Calu3 (cell line): ENCODE measurements at regions of chr5 and their contacts with region 1.

Region 1: GRCh38 chr5:50667653-50668595 is 1.5 kb downstream of the PARP8 start:
- DNase-seq: peak; percentile 89
- H3K4me3 Mint-ChIP-seq: peak overlapping the region; percentile 98
- H3K27ac Mint-ChIP-seq: peak overlapping the region; percentile 100
- H3K4me1 Mint-ChIP-seq: peaks cover 26% of the 10 kb centered on the region
- H3K27me3 Mint-ChIP-seq: no peaks in the 10 kb centered on the region
- CTCF ChIP-seq: no peak

Region 2: DNA sequence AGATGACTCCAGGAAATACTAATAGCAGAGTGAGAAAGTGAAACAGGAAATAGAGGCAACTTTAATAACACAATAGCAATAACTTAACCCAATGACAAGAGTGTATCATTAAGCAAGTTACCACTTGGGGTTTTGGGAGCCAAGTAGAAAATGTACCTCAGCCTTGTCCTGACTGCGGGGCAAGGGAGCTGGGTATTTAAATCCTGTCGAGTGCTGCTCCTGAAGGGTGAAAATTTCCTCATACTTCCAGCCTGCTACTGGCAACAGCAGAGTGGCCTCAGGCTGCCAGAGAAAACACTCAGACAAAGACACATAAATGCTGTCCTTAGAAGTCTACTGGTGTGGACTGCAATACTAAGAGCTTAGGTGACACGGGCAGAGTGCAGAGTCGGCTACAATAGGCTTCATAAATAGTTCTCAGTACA is 114.4 kb before region 1 on chr5:
- CTCF ChIA-PET with region 1: no interaction called
- intact Hi-C with region 1: loop called (anchors 2 kb)
- DNase-seq: peak; percentile 31
- H3K4me3 Mint-ChIP-seq: peak overlapping the region; percentile 38
- H3K27ac Mint-ChIP-seq: peak overlapping the region; percentile 66
- H3K4me1 Mint-ChIP-seq: peaks cover 7% of the 10 kb centered on the region
- H3K27me3 Mint-ChIP-seq: no peaks in the 10 kb centered on the region
- CTCF ChIP-seq: no peak

Region 3: GRCh38 chr5:50595199-50595598 is 72.7 kb before region 1 on chr5:
- CTCF ChIA-PET with region 1: no interaction called
- intact Hi-C with region 1: loop called (anchors 5 kb)
- DNase-seq: no peak
- H3K4me3 Mint-ChIP-seq: no peak overlapping the region
- H3K27ac Mint-ChIP-seq: peak overlapping the region; percentile 60
- H3K4me1 Mint-ChIP-seq: peaks cover 45% of the 10 kb centered on the region
- H3K27me3 Mint-ChIP-seq: no peaks in the 10 kb centered on the region
- CTCF ChIP-seq: no peak

Region 4: DNA sequence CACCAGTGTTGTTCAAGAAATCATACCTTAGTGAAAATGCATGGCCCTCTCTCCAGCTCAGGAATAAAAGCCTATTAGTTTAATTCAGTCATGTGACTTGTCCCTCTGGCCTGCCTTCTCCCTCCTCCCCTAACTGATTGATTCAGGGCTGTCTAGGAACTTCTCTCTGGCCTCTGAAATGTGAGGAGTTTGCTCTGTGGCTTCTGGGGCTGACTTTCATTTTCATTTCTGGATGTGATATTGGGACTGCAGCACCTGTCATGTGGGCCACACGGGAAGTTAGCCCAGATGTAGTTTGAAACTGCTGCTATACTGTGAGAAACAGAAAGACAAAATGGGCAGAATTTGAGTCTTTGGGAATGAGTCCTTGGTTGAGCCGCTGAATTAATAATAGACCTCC is 43.3 kb after region 1 on chr5:
- CTCF ChIA-PET with region 1: no interaction called
- intact Hi-C with region 1: loop called (anchors 5 kb)
- DNase-seq: peak; percentile 53
- H3K4me3 Mint-ChIP-seq: peak overlapping the region; percentile 61
- H3K27ac Mint-ChIP-seq: peak overlapping the region; percentile 78
- H3K4me1 Mint-ChIP-seq: peaks cover 39% of the 10 kb centered on the region
- H3K27me3 Mint-ChIP-seq: no peaks in the 10 kb centered on the region
- CTCF ChIP-seq: no peak

Region 5: DNA sequence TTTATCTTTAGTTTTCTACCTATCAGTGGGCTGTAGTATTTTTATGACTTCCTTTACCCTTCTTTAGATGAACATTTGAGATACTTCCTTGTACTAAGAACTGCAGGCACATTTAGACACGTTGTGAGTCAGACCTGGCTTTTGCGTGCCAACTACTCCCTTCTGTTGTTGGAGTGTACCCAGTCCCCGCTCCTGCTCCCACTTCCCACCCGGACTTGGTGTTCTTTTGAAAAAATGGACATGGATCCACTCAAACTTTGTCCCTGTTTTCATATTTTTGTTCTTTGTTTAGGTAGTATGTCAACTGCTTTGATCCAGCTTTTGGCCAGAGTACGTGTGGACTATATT is 59.2 kb after region 1 on chr5:
- CTCF ChIA-PET with region 1: no interaction called
- intact Hi-C with region 1: loop called (anchors 5 kb)
- DNase-seq: peak; percentile 60
- H3K4me3 Mint-ChIP-seq: peak overlapping the region; percentile 65
- H3K27ac Mint-ChIP-seq: peak overlapping the region; percentile 91
- H3K4me1 Mint-ChIP-seq: peaks cover 51% of the 10 kb centered on the region
- H3K27me3 Mint-ChIP-seq: no peaks in the 10 kb centered on the region
- CTCF ChIP-seq: no peak

Region 6: DNA sequence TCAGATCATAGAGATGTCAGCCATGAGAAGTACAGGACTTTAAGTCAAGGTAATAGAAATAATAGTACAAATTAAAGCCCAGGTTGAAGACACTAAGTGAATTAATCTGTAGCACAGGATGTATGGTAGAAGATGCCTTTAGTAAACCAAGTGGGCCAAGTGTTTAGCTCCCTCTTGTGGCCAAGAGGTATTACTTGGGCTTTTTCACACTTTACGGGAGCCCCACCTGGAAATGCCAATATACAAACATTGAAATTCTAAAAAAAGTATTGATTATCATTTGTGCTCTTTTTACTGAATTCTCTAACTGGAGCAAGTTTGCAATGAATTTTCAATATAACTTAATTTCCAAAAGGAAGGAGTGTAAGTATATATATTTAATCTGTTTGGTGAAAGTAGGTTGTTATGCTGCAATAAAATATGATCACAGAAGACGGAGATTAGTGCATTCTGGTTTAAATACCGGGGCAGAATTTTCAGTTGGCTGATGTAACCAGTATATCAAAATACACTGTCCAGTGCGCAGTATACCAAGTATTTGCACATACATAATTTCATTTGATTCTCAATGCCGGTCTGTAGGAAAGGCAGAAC is 83.2 kb after region 1 on chr5:
- CTCF ChIA-PET with region 1: interaction called, 3 read pairs
- intact Hi-C with region 1: loop called (anchors 2 kb)
- DNase-seq: peak; percentile 20
- H3K4me3 Mint-ChIP-seq: no peak overlapping the region
- H3K27ac Mint-ChIP-seq: no peak overlapping the region
- H3K4me1 Mint-ChIP-seq: peaks cover 21% of the 10 kb centered on the region
- H3K27me3 Mint-ChIP-seq: no peaks in the 10 kb centered on the region
- CTCF ChIP-seq: peak; percentile 66